CD8-positive, alpha-beta T cell (primary cell): ENCODE measurements at regions of chr11 and their contacts with region 1.

Region 1: DNA sequence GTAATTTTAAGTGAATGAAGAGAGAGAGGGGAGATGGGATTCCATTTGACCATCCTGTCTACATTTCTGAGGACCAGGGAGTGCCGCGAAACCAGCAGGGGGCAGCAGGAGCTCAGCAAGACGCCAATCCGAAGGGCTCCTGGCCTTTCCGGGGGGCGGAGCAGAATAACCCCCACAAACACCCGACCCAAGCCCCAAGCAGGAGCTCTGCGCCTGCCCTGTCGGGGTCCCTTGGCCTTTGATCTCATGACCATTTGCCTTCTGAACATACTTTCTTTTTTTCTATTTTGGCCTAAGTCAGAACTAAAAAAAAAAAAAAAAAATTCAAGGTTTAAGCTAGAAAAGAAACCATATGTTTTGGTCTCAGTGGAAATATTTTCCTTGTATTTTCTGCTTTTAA is 21.9 kb upstream of the SCN2B start:
- DNase-seq: peak; percentile 68 to 89 (median 88)
- ATAC-seq: peak; percentile 18
- H3K4me3 ChIP-seq: no peak overlapping the region
- H3K4me3 Mint-ChIP-seq: peak overlapping the region; percentile 27
- H3K27ac ChIP-seq: no peak overlapping the region
- H3K27ac Mint-ChIP-seq: peak overlapping the region; percentile 81
- H3K4me1 ChIP-seq: peaks cover 46% of the 10 kb centered on the region
- H3K4me1 Mint-ChIP-seq: peaks cover 11% of the 10 kb centered on the region
- H3K27me3 ChIP-seq: no peaks in the 10 kb centered on the region
- H3K27me3 Mint-ChIP-seq: no peaks in the 10 kb centered on the region
- CTCF ChIP-seq: peak; percentile 95

Region 2: DNA sequence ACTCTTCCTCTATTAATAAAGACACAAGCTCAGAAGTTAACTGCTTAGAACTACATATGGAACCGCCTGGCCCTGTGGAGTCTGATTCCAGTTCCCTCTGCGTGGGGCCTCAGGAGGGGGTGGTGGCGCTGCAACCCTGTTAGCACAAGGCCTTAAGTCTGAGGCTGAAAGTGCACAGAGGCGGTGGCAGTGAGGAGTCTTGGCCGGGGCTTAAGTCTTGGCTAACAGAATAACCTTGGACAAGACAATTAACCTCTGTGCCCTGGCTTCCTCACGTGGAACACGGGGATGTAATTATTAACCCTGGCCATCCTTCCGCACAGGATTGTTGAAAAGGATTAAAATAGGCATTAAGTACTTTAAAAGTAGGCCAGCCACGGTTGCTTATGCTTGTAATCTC is 679.2 kb before region 1 on chr11:
- CTCF ChIA-PET with region 1: no interaction called
- POLR2A ChIA-PET with region 1: no interaction called
- intact Hi-C with region 1: no loop called
- DNase-seq: no peak
- ATAC-seq: no peak
- H3K4me3 ChIP-seq: no peak overlapping the region
- H3K4me3 Mint-ChIP-seq: no peak overlapping the region
- H3K27ac ChIP-seq: no peak overlapping the region
- H3K27ac Mint-ChIP-seq: no peak overlapping the region
- H3K4me1 ChIP-seq: no peaks in the 10 kb centered on the region
- H3K4me1 Mint-ChIP-seq: no peaks in the 10 kb centered on the region
- H3K27me3 ChIP-seq: no peaks in the 10 kb centered on the region
- H3K27me3 Mint-ChIP-seq: no peaks in the 10 kb centered on the region
- CTCF ChIP-seq: no peak

Region 3: DNA sequence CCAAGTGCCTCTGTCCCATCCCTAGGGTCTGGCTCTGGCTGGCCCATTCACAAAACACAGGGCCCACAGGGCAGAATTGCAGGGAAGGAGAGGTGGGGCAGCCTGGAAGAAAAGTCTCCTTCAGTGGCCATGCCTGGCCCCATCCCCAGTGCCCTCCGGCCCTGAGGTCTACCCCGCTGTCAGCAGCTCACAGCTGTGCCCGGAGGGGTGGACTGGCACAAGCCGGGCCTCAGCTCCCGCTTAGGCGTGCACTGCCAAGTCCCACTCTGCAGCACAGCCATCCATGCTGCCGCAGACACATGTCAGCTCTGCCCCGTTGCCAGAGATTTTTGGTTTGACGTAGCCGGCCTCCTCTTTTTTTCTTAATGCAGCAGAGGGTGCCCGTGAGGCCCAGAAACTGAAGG is 18.1 kb before region 1 on chr11:
- CTCF ChIA-PET with region 1: interaction called, 15 read pairs
- POLR2A ChIA-PET with region 1: no interaction called
- intact Hi-C with region 1: no loop called
- DNase-seq: peak in 1 of 9 experiments; percentile 33
- ATAC-seq: no peak
- H3K4me3 ChIP-seq: no peak overlapping the region
- H3K4me3 Mint-ChIP-seq: no peak overlapping the region
- H3K27ac ChIP-seq: no peak overlapping the region
- H3K27ac Mint-ChIP-seq: no peak overlapping the region
- H3K4me1 ChIP-seq: no peaks in the 10 kb centered on the region
- H3K4me1 Mint-ChIP-seq: no peaks in the 10 kb centered on the region
- H3K27me3 ChIP-seq: no peaks in the 10 kb centered on the region
- H3K27me3 Mint-ChIP-seq: peaks cover 18% of the 10 kb centered on the region
- CTCF ChIP-seq: no peak

Region 4: GRCh38 chr11:118227865-118228785 is 29.8 kb after region 1 on chr11:
- CTCF ChIA-PET with region 1: interaction called, 25 read pairs
- POLR2A ChIA-PET with region 1: interaction called, 18 read pairs
- intact Hi-C with region 1: loop called (anchors 1 kb)
- DNase-seq: peak in 3 of 9 experiments; percentile 19 to 82 (median 77)
- ATAC-seq: peak; percentile 13
- H3K4me3 ChIP-seq: peak overlapping the region in 1 of 2 experiments; percentile 1
- H3K4me3 Mint-ChIP-seq: peak overlapping the region; percentile 48
- H3K27ac ChIP-seq: peak overlapping the region; percentile 8 to 46
- H3K27ac Mint-ChIP-seq: no peak overlapping the region
- H3K4me1 ChIP-seq: peaks cover 66% of the 10 kb centered on the region
- H3K4me1 Mint-ChIP-seq: peaks cover 49% of the 10 kb centered on the region
- H3K27me3 ChIP-seq: no peaks in the 10 kb centered on the region
- H3K27me3 Mint-ChIP-seq: no peaks in the 10 kb centered on the region
- CTCF ChIP-seq: no peak

Region 5: DNA sequence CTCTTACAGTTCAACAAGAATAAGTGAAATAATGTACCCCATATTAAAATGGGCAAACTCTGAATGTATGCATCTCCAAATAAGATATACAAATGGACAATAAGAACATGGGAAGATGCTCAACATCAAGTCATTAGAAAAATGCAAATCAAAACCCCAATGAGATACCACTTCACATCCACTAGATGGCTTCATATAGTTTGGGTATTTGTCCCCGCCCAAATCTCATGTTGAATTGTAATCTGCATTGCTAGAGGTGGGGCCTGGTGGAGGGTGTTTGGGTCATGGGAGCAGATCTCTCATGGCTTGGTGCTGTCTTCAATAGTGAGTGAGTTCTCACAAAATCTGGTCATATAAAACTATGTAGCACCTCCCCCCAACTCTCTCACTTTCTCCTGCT is 60.0 kb after region 1 on chr11:
- CTCF ChIA-PET with region 1: interaction called, 27 read pairs
- POLR2A ChIA-PET with region 1: interaction called, 5 read pairs
- intact Hi-C with region 1: loop called (anchors 2 kb)
- DNase-seq: peak in 1 of 9 experiments; percentile 29
- ATAC-seq: no peak
- H3K4me3 ChIP-seq: no peak overlapping the region
- H3K4me3 Mint-ChIP-seq: no peak overlapping the region
- H3K27ac ChIP-seq: no peak overlapping the region
- H3K27ac Mint-ChIP-seq: no peak overlapping the region
- H3K4me1 ChIP-seq: peaks cover 28% of the 10 kb centered on the region
- H3K4me1 Mint-ChIP-seq: peaks cover 33% of the 10 kb centered on the region
- H3K27me3 ChIP-seq: no peaks in the 10 kb centered on the region
- H3K27me3 Mint-ChIP-seq: no peaks in the 10 kb centered on the region
- CTCF ChIP-seq: no peak

Region 6: DNA sequence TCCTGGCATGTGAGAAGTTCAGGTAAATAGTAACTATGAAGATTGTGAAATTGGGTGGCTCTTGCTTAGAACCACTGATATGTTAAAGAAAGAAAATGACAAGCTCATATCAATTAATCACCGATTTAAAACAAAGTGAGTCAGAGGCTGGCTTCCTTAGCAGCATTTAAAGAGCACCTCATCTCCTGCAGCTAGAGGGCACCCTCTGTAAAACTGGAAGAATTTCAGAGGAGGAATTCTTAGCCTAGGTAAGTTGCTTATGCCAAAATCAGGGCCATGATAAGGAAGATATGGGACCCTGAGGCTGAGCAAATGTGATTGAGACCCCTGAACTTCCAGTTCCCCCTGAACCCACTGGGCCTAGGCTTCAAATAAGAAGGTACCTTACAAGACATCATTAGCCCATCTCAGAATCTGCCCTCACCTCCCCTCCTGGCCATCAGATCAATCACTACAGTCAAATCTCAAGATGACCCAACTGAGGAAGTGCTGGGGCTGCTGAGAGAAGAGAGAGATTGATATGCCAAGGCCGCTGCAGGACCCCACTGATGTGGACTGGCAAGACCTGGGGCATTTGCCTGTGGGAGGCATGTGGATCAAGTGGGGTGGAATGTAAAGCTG is 97.6 kb after region 1 on chr11:
- CTCF ChIA-PET with region 1: interaction called, 44 read pairs
- POLR2A ChIA-PET with region 1: interaction called, 4 read pairs
- intact Hi-C with region 1: loop called (anchors 1 kb)
- DNase-seq: peak in 7 of 9 experiments; percentile 22 to 79 (median 59)
- ATAC-seq: peak; percentile 81
- H3K4me3 ChIP-seq: no peak overlapping the region
- H3K4me3 Mint-ChIP-seq: no peak overlapping the region
- H3K27ac ChIP-seq: peak overlapping the region in 1 of 2 experiments; percentile 52
- H3K27ac Mint-ChIP-seq: peak overlapping the region; percentile 46
- H3K4me1 ChIP-seq: peaks cover 7% of the 10 kb centered on the region
- H3K4me1 Mint-ChIP-seq: peaks cover 27% of the 10 kb centered on the region
- H3K27me3 ChIP-seq: no peaks in the 10 kb centered on the region
- H3K27me3 Mint-ChIP-seq: no peaks in the 10 kb centered on the region
- CTCF ChIP-seq: peak; percentile 64

Region 7: DNA sequence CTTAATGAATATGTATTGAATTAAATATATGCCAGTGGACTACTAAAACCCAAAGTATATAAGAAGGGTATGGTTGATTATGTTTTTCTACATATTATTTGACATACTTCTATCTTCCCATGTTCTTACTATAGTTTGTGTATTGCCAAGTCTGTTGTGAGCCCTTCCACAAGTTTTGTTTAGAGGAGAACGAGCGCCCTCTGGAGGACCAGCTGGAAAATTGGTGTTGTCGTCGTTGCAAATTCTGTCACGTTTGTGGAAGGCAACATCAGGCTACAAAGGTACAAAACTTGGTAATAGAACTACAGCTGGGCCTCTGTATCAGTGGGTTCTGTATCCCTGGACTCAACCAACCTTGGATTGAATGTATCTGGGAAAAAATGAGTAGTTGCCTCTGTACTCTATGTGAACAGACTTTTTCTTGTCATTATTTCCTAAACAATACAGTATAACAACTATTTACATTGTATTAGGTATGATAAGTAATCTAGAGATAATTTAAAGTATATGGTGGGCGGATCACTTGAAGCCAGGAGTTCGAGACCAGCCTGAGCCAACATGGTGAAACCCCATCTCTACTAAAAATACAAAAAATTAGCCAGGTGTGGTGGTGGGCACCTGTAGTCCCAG is 290.2 kb after region 1 on chr11:
- CTCF ChIA-PET with region 1: interaction called, 6 read pairs
- POLR2A ChIA-PET with region 1: no interaction called
- intact Hi-C with region 1: loop called (anchors 1 kb)
- DNase-seq: peak; percentile 66 to 88 (median 81)
- ATAC-seq: peak; percentile 77
- H3K4me3 ChIP-seq: no peak overlapping the region
- H3K4me3 Mint-ChIP-seq: no peak overlapping the region
- H3K27ac ChIP-seq: no peak overlapping the region
- H3K27ac Mint-ChIP-seq: no peak overlapping the region
- H3K4me1 ChIP-seq: no peaks in the 10 kb centered on the region
- H3K4me1 Mint-ChIP-seq: peaks cover 4% of the 10 kb centered on the region
- H3K27me3 ChIP-seq: no peaks in the 10 kb centered on the region
- H3K27me3 Mint-ChIP-seq: no peaks in the 10 kb centered on the region
- CTCF ChIP-seq: peak; percentile 93